OCI-LY7 (cell line): ENCODE measurements at regions of chr22 and their contacts with region 1.

Region 1: GRCh38 chr22:36387752-36388518 is at the start of gene MYH9:
- DNase-seq: peak; percentile 99
- H3K4me3 ChIP-seq: peak within 1 kb of the TSS; percentile 86
- H3K27ac ChIP-seq: peak within 1 kb of the TSS; percentile 93
- H3K4me1 ChIP-seq: peaks cover 45% of the 10 kb centered on the region
- CTCF ChIP-seq: no peak
- total RNA-seq, gene MYH9: 112 and 133 TPM in 2 replicates

Region 2: DNA sequence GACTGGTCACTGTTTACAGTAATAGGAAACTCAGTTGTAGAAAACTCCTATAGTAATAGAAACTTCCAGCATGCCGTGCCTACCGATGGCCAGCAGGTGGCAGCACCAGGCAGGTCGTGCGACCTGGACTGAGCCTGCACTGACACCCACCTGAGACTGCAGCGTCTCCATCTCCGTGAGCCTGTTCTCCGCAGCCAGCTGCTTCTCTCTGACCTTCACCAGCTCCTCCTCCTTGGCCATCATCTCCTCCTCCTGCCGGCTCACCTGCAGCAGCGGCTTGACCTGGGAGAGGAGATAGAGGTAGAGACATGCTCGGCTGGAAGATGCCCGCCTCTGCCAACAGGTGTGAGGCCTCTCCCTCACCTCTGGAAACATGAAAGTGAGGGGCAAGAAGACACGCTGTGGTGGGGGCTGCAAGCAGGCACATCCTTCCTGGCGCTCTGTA is 86.5 kb before region 1 on chr22:
- CTCF ChIA-PET with region 1: no interaction called
- POLR2A ChIA-PET with region 1: no interaction called
- intact Hi-C with region 1: loop called (anchors 5 kb)
- DNase-seq: peak; percentile 82
- H3K4me3 ChIP-seq: no peak overlapping the region
- H3K27ac ChIP-seq: no peak overlapping the region
- H3K4me1 ChIP-seq: no peaks in the 10 kb centered on the region
- CTCF ChIP-seq: peak; percentile 98

Region 3: GRCh38 chr22:36331306-36331911 is 56.5 kb before region 1 on chr22:
- CTCF ChIA-PET with region 1: interaction called, 3 read pairs
- POLR2A ChIA-PET with region 1: no interaction called
- intact Hi-C with region 1: loop called (anchors 1 kb)
- DNase-seq: peak; percentile 91
- H3K4me3 ChIP-seq: peak overlapping the region; percentile 60
- H3K27ac ChIP-seq: peak overlapping the region; percentile 89
- H3K4me1 ChIP-seq: peaks cover 66% of the 10 kb centered on the region
- CTCF ChIP-seq: no peak

Region 4: GRCh38 chr22:36405671-36406538 is 18.0 kb after region 1 on chr22:
- CTCF ChIA-PET with region 1: no interaction called
- POLR2A ChIA-PET with region 1: interaction called, 3 read pairs
- intact Hi-C with region 1: loop called (anchors 2 kb)
- DNase-seq: peak; percentile 88
- H3K4me3 ChIP-seq: peak overlapping the region; percentile 18
- H3K27ac ChIP-seq: peak overlapping the region; percentile 92
- H3K4me1 ChIP-seq: peaks cover 50% of the 10 kb centered on the region
- CTCF ChIP-seq: peak; percentile 41; the same call in 1 of the 2 replicates

Region 5: GRCh38 chr22:36435516-36436415 is 47.8 kb after region 1 on chr22:
- CTCF ChIA-PET with region 1: no interaction called
- POLR2A ChIA-PET with region 1: no interaction called
- intact Hi-C with region 1: no loop called
- DNase-seq: no peak
- H3K4me3 ChIP-seq: no peak overlapping the region
- H3K27ac ChIP-seq: no peak overlapping the region
- H3K4me1 ChIP-seq: peaks cover 7% of the 10 kb centered on the region
- CTCF ChIP-seq: no peak

Region 6: GRCh38 chr22:36454916-36455570 is 67.1 kb after region 1 on chr22:
- CTCF ChIA-PET with region 1: no interaction called
- POLR2A ChIA-PET with region 1: interaction called, 3 read pairs
- intact Hi-C with region 1: loop called (anchors 2 kb)
- DNase-seq: peak; percentile 96
- H3K4me3 ChIP-seq: peak overlapping the region; percentile 63
- H3K27ac ChIP-seq: peak overlapping the region; percentile 68
- H3K4me1 ChIP-seq: peaks cover 46% of the 10 kb centered on the region
- CTCF ChIP-seq: peak; percentile 44

Region 7: GRCh38 chr22:36470162-36470993 is 82.4 kb after region 1 on chr22:
- CTCF ChIA-PET with region 1: no interaction called
- POLR2A ChIA-PET with region 1: no interaction called
- intact Hi-C with region 1: loop called (anchors 5 kb)
- DNase-seq: peak; percentile 88
- H3K4me3 ChIP-seq: no peak overlapping the region
- H3K27ac ChIP-seq: no peak overlapping the region
- H3K4me1 ChIP-seq: peaks cover 3% of the 10 kb centered on the region
- CTCF ChIP-seq: peak; percentile 98